AG04449 (cell line): ENCODE measurements at regions of chr6 and their contacts with region 1.

Region 1: GRCh38 chr6:1596088-1596852 is 13.4 kb upstream of the FOXC1 start:
- DNase-seq: no peak
- H3K4me3 ChIP-seq: peak overlapping the region; percentile 49
- CTCF ChIP-seq: peak; percentile 88

Region 2: GRCh38 chr6:1552296-1552761 is 43.9 kb before region 1 on chr6:
- CTCF ChIA-PET with region 1: no interaction called
- POLR2A ChIA-PET with region 1: no interaction called
- DNase-seq: no peak
- H3K4me3 ChIP-seq: no peak overlapping the region
- CTCF ChIP-seq: peak; percentile 7

Region 3: DNA sequence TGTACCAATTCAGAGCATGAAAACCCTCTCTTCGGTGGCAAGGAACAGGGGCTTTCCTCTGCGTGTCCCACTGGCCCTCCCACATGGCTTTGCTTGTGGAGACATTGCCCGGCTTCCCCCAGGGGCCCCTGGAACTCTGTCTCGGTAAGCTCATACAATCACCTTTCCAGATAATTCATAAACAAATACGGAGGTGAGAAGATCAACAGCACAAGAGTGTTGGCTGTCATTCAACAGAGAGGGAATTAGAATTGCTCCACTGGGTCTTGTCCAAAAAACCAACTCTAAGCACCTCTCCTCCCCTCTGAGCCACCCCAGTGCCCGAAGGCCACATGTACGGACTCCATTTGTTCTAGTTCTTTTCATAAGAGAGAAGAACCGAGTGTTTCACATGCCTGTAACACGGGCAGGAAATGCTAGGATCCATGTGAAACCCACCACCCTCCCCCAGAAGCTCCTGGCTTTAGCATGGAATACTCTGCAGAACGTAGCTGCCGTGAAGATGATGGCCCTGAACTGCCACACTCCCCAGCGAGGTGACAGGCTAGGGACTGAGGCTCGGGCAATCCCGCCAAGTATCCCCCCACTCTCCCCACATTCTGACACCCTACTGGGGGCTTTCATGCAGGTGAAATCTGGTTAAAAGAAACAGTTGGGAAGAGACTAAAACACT is 11.1 kb before region 1 on chr6:
- CTCF ChIA-PET with region 1: interaction called, 11 read pairs
- POLR2A ChIA-PET with region 1: no interaction called
- DNase-seq: no peak
- H3K4me3 ChIP-seq: no peak overlapping the region
- CTCF ChIP-seq: no peak

Region 4: GRCh38 chr6:1709234-1709641 is 113.0 kb after region 1 on chr6:
- CTCF ChIA-PET with region 1: no interaction called
- POLR2A ChIA-PET with region 1: no interaction called
- DNase-seq: no peak
- H3K4me3 ChIP-seq: no peak overlapping the region
- CTCF ChIP-seq: no peak

Region 5: DNA sequence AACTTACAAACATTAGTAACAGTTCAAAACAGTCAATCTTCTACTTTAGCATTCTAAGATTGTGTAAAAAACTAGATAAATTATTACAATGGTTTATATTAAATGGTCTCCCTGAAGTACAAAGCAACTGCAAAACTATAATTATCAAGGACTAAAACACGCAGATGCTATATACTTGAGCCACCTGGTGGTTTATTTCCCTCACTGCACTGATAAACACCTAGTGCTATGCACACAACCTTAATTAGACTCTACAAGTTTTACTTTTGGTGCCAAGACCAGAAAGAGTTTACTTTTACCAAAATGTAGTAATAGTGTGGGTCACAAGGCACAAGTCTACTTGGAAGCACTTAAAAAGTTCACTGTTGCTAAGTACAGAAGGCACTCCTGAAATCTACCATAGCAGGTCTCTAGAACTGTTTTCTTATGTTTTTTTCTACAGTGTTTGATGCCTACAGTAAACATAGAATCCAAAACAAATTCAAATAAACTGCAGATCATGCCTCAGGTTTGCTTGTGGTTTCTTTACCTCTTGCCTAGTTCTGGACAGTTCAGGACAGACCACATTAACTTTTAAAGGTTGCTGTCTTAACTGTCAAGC is 599.9 kb after region 1 on chr6:
- CTCF ChIA-PET with region 1: interaction called, 15 read pairs
- POLR2A ChIA-PET with region 1: no interaction called
- DNase-seq: no peak
- H3K4me3 ChIP-seq: no peak overlapping the region
- CTCF ChIP-seq: peak; percentile 55

Region 6: GRCh38 chr6:2454180-2454579 is 857.9 kb after region 1 on chr6:
- CTCF ChIA-PET with region 1: interaction called, 37 read pairs
- POLR2A ChIA-PET with region 1: no interaction called
- DNase-seq: no peak
- H3K4me3 ChIP-seq: no peak overlapping the region
- CTCF ChIP-seq: no peak

Region 7: DNA sequence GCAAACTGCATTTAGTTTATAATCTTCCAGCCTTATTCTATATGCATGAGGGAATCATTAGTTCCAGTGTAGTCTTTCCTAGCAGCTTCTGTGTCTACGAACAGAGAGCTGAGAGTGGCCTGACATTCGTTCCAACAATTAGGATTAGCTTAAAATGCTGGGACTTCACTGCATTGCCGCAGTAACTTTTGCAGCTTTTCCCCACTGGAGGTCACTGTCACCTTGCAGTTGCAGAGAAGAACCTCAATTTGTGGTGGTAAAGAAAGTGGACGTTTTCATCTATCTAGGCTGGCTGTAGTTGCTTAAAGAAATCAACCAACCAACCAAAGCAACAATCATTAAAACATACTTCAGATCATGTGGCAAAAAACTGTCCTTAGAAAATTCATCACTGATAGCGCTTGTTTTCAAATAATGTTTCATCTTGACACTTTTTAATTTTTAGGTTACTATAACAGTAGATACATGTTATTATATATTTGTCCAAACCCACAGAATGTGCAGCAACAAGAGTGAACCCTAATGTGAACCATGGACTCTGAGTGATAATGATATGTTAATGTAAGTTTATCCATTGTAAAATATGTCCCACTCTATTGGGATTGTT is 1142.2 kb after region 1 on chr6:
- CTCF ChIA-PET with region 1: interaction called, 30 read pairs
- POLR2A ChIA-PET with region 1: no interaction called
- DNase-seq: no peak
- H3K4me3 ChIP-seq: no peak overlapping the region
- CTCF ChIP-seq: peak; percentile 62